ENCODE measurements at regions of chr5 and their contacts with region 1.

Region 1: DNA sequence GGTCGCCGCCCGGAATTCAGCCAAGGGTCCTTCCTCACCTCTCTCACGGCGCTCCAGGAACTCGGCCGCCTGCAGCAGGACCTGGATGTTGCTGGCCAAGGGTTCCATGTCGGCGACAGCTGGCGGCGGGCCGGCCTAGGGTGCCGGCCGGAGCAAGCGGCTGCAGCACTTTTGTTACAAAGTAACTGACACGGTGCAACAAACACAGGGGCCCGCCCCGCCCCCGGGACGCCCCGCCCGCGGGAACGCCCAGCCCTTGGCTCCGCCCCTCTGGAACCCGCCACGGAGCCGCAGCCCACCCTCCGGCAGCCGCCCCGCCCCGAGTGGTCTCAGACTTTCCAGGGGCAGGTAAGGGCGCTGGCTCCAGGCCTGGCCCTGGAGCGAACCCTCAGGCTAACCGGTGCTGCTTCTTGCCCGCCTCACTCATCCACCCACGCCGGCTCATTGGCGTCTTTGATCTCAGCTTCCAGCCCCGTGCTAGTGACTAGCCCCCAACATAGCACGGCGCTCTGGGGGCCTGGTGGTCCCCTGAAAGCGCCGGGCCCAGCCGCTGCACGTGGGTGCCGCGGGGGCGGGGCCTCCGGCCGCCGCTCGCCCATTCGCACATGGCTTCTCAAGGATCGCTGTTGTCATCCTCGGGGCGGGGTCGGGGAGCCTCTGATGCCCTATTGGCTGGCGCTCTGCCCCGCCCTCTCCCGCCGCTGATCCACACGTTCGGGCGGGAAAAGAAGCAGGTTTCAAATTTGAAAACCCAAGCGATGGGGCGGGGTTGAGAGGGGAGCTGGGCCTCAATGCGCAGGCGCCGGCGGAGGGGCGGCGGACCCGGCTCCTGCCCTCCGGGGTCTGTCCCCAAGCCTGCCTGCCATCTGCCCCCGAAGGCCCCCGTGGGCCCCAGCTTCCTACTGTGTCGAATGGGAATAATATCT is at the start of gene MXD3:
- DNase-seq: peak; percentile 99
- ATAC-seq: peak; percentile 71
- H3K4me3 Mint-ChIP-seq: peak within 1 kb of the TSS; percentile 84
- H3K27ac Mint-ChIP-seq: peak within 1 kb of the TSS; percentile 32; the same call in 1 of the 2 replicates
- H3K4me1 Mint-ChIP-seq: peaks cover 18% of the 10 kb centered on the region
- H3K27me3 Mint-ChIP-seq: no peaks in the 10 kb centered on the region
- CTCF ChIP-seq: no peak
- total RNA-seq, gene MXD3: 16.9 to 25.7 TPM (median 18.8 TPM) in 3 replicates

Region 2: DNA sequence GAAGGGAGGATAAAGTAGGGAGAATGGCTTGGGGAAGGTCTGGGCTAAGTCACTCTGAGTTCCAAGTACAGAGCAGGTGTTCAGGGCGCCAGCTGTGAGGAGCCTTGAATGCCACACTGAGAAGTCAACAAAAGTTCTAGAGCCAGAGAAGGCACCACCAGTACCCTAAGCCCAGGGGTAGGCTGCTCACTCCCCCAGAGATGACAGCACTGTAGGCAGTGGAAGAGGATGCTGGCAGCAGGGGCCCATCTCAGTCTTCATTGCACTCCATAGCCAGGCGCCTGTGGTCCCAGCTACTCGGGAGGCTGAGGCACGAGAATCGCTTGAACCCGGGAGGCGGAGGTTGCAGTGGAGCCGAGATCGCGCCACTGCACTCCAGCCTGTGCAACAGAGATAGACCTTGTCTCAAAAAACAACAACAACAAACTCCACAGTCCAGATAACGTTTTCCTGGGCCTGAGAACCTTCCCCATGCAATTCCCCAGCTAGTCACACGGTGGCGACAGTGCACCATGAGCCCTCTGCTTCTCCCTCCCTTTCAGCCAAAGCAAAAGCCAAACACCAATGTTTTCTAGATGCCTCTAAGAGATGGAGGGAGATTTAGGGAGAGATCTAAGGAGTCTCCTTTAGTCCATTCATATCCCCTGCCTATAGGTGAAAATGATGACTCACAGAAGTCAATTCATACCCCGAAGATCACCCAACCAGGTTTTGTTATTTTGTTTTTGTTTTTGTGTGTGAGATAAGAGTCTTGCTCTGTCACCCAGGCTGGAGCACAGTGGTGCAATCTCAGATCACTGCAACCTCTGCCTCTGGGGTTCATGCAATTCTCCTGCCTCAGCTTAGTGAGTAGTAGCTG is 198.2 kb before region 1 on chr5:
- CTCF ChIA-PET with region 1: interaction called, 28 read pairs
- POLR2A ChIA-PET with region 1: no interaction called
- DNase-seq: peak; percentile 82
- ATAC-seq: peak; percentile 15
- H3K4me3 Mint-ChIP-seq: no peak overlapping the region
- H3K27ac Mint-ChIP-seq: no peak overlapping the region; the same call in 1 of the 2 replicates
- H3K4me1 Mint-ChIP-seq: peaks cover 11% of the 10 kb centered on the region
- H3K27me3 Mint-ChIP-seq: peaks cover 15% of the 10 kb centered on the region
- CTCF ChIP-seq: peak; percentile 93

Region 3: DNA sequence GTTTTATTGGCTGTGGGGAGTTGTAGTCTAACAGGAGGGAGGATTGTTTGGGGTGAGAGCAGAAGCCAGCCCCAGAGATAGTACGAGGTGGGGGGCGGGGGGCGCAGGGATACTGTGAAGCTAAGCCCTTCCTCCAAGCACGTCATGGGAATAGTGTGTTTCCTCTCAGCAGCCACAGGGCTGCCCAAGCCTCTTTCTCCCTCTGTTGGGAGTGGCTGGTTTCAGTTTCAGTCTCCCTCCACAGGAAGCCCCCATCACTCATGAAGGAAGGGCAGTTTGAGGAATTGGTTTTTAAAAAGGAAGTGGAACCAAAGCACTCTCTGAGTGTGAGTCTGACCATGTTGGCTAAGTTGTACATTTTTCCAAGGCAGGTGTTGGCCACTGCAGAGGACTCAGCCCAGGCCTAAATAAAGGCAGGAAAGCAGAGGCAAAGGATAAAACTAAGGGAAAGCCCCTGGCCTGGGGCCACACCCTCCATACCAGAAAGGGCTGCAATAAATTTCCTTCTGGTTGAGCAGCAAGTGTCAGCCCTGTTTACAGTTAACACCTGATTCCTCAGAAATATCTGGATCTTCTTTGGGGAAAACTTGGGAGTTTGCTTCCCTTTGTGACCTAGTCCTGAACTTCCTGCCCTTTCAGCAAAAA is 11.6 kb before region 1 on chr5:
- CTCF ChIA-PET with region 1: interaction called, 36 read pairs
- POLR2A ChIA-PET with region 1: interaction called, 6 read pairs
- DNase-seq: no peak
- ATAC-seq: peak; percentile 25
- H3K4me3 Mint-ChIP-seq: no peak overlapping the region
- H3K27ac Mint-ChIP-seq: peak overlapping the region; percentile 99
- H3K4me1 Mint-ChIP-seq: peaks cover 54% of the 10 kb centered on the region
- H3K27me3 Mint-ChIP-seq: no peaks in the 10 kb centered on the region
- CTCF ChIP-seq: no peak

Region 4: GRCh38 chr5:177362610-177363507 is 50.9 kb after region 1 on chr5:
- CTCF ChIA-PET with region 1: interaction called, 51 read pairs
- POLR2A ChIA-PET with region 1: no interaction called
- DNase-seq: peak; percentile 76
- ATAC-seq: peak; percentile 39
- H3K4me3 Mint-ChIP-seq: peak overlapping the region; percentile 76
- H3K27ac Mint-ChIP-seq: peak overlapping the region; percentile 74; the same call in 1 of the 2 replicates
- H3K4me1 Mint-ChIP-seq: peaks cover 40% of the 10 kb centered on the region
- H3K27me3 Mint-ChIP-seq: peaks cover 14% of the 10 kb centered on the region
- CTCF ChIP-seq: no peak

Region 5: DNA sequence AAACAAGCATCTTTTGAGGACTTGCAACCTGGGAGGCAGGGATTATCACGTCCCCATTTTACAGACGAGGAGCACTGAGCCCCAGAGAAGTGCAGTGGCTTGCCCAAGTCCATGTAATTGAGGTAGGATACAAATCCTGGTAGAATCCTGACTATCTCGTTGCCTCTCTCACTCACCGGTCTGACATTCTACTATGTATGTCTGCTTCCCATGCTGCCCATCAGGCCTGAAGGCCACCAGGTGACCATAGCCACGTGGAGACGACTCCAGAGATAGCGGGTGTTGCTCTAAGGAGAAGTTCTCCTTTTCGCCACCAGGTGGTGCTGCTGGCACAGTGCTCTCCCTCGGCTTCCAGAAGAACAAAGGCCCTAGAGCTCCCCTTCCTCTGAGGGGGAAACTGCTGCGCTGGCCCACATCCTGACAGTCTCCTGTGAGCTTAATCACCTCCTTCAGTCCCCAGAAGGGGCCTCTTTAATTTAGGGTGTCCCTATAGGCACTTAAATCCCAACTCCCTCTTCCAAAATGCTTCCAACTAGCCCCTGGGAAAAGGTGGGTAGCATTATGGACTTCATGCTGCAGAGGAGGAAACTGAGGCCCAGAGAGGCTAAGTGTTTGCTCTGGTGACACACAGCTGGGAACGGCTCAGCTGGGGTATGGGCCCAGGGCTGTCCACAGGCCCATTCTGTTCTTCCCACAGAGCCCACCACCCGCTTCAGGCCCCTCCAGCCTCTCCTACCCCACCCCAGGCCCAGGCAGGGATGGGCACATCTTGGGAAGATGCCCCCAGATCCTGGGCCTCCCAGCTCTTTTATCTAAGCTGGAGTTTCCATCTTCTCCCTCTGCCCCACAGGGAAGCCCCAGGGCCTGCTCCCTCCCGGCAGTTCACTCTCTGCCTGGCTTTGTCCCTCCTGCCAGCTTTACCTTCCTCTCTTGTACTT is 78.6 kb after region 1 on chr5:
- CTCF ChIA-PET with region 1: interaction called, 44 read pairs
- POLR2A ChIA-PET with region 1: no interaction called
- DNase-seq: peak; percentile 93
- ATAC-seq: peak; percentile 88
- H3K4me3 Mint-ChIP-seq: no peak overlapping the region
- H3K27ac Mint-ChIP-seq: no peak overlapping the region
- H3K4me1 Mint-ChIP-seq: peaks cover 32% of the 10 kb centered on the region
- H3K27me3 Mint-ChIP-seq: peaks cover 31% of the 10 kb centered on the region
- CTCF ChIP-seq: peak; percentile 98

Region 6: GRCh38 chr5:177440211-177440971 is 128.4 kb after region 1 on chr5:
- CTCF ChIA-PET with region 1: interaction called, 91 read pairs
- POLR2A ChIA-PET with region 1: no interaction called
- DNase-seq: no peak
- ATAC-seq: peak; percentile 58
- H3K4me3 Mint-ChIP-seq: no peak overlapping the region
- H3K27ac Mint-ChIP-seq: peak overlapping the region; percentile 31; the same call in 1 of the 2 replicates
- H3K4me1 Mint-ChIP-seq: peaks cover 23% of the 10 kb centered on the region
- H3K27me3 Mint-ChIP-seq: peaks cover 15% of the 10 kb centered on the region
- CTCF ChIP-seq: no peak

Region 7: DNA sequence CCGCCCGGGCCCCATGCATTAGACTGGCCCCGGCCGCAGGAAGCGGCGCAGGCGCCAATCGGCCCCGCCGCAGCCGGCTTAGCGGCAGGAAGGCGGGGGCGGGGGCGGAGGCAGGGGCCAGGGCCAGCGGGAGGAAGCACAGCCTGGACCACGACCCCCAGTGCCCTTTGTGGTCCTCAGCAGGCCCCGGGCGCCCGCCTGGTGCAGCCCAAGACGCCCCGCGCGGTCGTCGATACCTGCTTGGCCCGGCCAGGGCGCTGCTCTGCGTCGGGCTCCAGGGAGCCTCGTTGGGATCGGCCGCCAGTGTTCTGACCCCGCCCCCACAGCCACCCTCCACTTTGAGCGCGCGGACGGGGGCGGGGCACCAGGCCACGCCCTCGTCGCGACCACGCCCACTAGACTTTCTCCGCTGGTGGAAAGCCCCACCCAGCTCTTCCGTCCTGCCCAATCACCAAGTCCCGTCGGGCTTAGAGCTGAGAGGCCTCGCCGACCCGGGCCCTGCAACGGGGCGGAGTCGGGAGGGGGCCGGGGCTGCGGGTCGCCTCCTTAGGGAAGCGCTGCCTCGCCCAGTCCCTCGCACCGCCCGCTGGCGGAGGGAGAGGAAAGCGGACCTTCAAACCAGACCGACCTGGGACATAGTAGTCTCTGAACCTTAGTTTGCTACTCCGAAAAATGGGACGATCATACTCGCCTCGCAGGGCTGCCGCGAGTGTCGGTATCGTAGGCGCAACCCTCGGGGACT is 185.5 kb after region 1 on chr5 and contains the start of gene PDLIM7:
- CTCF ChIA-PET with region 1: interaction called, 14 read pairs
- POLR2A ChIA-PET with region 1: no interaction called
- DNase-seq: peak; percentile 97
- ATAC-seq: peak; percentile 71
- H3K4me3 Mint-ChIP-seq: peak within 1 kb of the TSS; percentile 80
- H3K27ac Mint-ChIP-seq: peak within 1 kb of the TSS; percentile 92; the same call in 1 of the 2 replicates
- H3K4me1 Mint-ChIP-seq: peaks cover 36% of the 10 kb centered on the region
- H3K27me3 Mint-ChIP-seq: peaks cover 31% of the 10 kb centered on the region
- CTCF ChIP-seq: no peak
- total RNA-seq, gene PDLIM7: 124 to 142 TPM (median 139 TPM) in 3 replicates